Activated CD4-positive, alpha-beta memory T cell treated with anti-CD3 and anti-CD28 coated beads for 36 hours (primary cell): ENCODE measurements at regions of chr3 and their contacts with region 1.

Region 1: GRCh38 chr3:136861890-136862616 is at the start of gene NCK1:
- DNase-seq: peak; percentile 99
- H3K4me3 Mint-ChIP-seq: peak within 1 kb of the TSS; percentile 94
- H3K27ac Mint-ChIP-seq: peak within 1 kb of the TSS; percentile 95
- H3K4me1 Mint-ChIP-seq: peaks cover 32% of the 10 kb centered on the region
- H3K27me3 Mint-ChIP-seq: no peaks in the 10 kb centered on the region
- total RNA-seq, gene NCK1: 32.3 to 38.0 TPM

Region 2: GRCh38 chr3:135965506-135966270 is 896.4 kb before region 1 on chr3 and contains the start of gene PPP2R3A:
- CTCF ChIA-PET with region 1: no interaction called
- POLR2A ChIA-PET with region 1: no interaction called
- intact Hi-C with region 1: loop called (anchors 5 kb)
- DNase-seq: peak; percentile 80
- H3K4me3 Mint-ChIP-seq: peak within 1 kb of the TSS; percentile 58
- H3K27ac Mint-ChIP-seq: no peak within 1 kb of the TSS
- H3K4me1 Mint-ChIP-seq: peaks cover 10% of the 10 kb centered on the region
- H3K27me3 Mint-ChIP-seq: peaks cover 28% of the 10 kb centered on the region
- total RNA-seq, gene PPP2R3A: 0.17 to 0.33 TPM

Region 3: GRCh38 chr3:136250226-136250902 is 611.7 kb before region 1 on chr3 and contains the start of gene PCCB:
- CTCF ChIA-PET with region 1: no interaction called
- POLR2A ChIA-PET with region 1: no interaction called
- intact Hi-C with region 1: loop called (anchors 10 kb)
- DNase-seq: peak; percentile 95
- H3K4me3 Mint-ChIP-seq: peak within 1 kb of the TSS; percentile 86
- H3K27ac Mint-ChIP-seq: peak within 1 kb of the TSS; percentile 88
- H3K4me1 Mint-ChIP-seq: peaks cover 18% of the 10 kb centered on the region
- H3K27me3 Mint-ChIP-seq: no peaks in the 10 kb centered on the region
- total RNA-seq, gene PCCB: 54.5 to 58.9 TPM

Region 4: GRCh38 chr3:136838641-136839555 is 23.2 kb before region 1 on chr3:
- CTCF ChIA-PET with region 1: interaction called, 4 read pairs
- POLR2A ChIA-PET with region 1: interaction called, 6 read pairs
- intact Hi-C with region 1: loop called (anchors 2 kb)
- DNase-seq: no peak
- H3K4me3 Mint-ChIP-seq: no peak overlapping the region
- H3K27ac Mint-ChIP-seq: peak overlapping the region; percentile 43
- H3K4me1 Mint-ChIP-seq: peaks cover 19% of the 10 kb centered on the region
- H3K27me3 Mint-ChIP-seq: no peaks in the 10 kb centered on the region

Region 5: GRCh38 chr3:136919799-136920580 is 57.9 kb after region 1 on chr3:
- CTCF ChIA-PET with region 1: interaction called, 4 read pairs
- POLR2A ChIA-PET with region 1: interaction called, 5 read pairs
- intact Hi-C with region 1: loop called (anchors 1 kb)
- DNase-seq: no peak
- H3K4me3 Mint-ChIP-seq: no peak overlapping the region
- H3K27ac Mint-ChIP-seq: peak overlapping the region; percentile 68
- H3K4me1 Mint-ChIP-seq: peaks cover 78% of the 10 kb centered on the region
- H3K27me3 Mint-ChIP-seq: no peaks in the 10 kb centered on the region

Region 6: GRCh38 chr3:136974670-136975069 is 112.6 kb after region 1 on chr3:
- CTCF ChIA-PET with region 1: no interaction called
- POLR2A ChIA-PET with region 1: no interaction called
- intact Hi-C with region 1: no loop called
- DNase-seq: no peak
- H3K4me3 Mint-ChIP-seq: no peak overlapping the region
- H3K27ac Mint-ChIP-seq: no peak overlapping the region
- H3K4me1 Mint-ChIP-seq: no peaks in the 10 kb centered on the region
- H3K27me3 Mint-ChIP-seq: no peaks in the 10 kb centered on the region

Region 7: DNA sequence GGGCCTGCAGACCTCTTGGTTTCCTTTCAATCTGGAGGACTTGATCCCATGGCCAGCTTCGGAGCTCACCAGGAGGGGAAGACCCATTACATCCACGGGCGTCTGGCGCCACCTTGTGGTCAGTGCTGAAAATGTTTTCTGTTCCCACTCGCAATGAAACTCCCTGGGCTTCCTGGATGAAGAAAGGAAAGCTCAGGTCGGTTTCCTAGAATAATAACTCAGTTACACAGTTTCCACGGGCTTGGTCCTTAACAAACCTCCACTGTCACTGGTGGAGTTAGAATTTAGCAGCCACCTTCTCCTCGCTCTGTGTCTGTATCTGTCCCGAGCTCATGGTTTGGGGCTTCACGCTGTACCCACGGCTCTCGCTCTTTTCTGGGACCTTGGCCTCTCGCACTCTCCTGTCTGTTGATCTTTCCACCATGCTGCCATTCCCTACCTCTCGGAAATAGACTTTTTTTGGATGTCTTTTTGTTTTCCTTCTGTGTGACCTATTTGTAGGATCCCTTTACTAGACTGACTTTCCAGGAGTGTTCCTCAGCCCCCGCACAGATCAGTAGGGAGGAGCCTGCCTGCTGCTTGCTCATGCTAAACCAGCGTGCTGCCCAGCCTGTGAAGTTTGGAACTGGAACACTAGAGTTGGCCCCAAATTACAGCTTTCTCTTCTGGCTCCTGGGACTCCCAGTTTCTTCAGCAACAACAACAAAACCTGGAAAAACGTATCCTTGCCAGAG is 152.1 kb after region 1 on chr3:
- CTCF ChIA-PET with region 1: interaction called, 34 read pairs
- POLR2A ChIA-PET with region 1: interaction called, 6 read pairs
- intact Hi-C with region 1: loop called (anchors 5 kb)
- DNase-seq: peak; percentile 89
- H3K4me3 Mint-ChIP-seq: peak overlapping the region; percentile 55
- H3K27ac Mint-ChIP-seq: no peak overlapping the region
- H3K4me1 Mint-ChIP-seq: peaks cover 7% of the 10 kb centered on the region
- H3K27me3 Mint-ChIP-seq: no peaks in the 10 kb centered on the region